Caco-2 (cell line): ENCODE measurements at regions of chr9 and their contacts with region 1.

Region 1: GRCh38 chr9:111661802-111662521 is 557 bp downstream of the GNG10 start:
- DNase-seq: peak; percentile 43
- H3K4me3 ChIP-seq: peak overlapping the region; percentile 90
- H3K4me3 Mint-ChIP-seq: peak overlapping the region; percentile 69
- H3K27ac Mint-ChIP-seq: peak overlapping the region; percentile 83
- H3K4me1 ChIP-seq: peaks cover 19% of the 10 kb centered on the region
- H3K4me1 Mint-ChIP-seq: peaks cover 25% of the 10 kb centered on the region
- H3K27me3 ChIP-seq: no peaks in the 10 kb centered on the region
- H3K27me3 Mint-ChIP-seq: no peaks in the 10 kb centered on the region
- CTCF ChIP-seq: no peak

Region 2: DNA sequence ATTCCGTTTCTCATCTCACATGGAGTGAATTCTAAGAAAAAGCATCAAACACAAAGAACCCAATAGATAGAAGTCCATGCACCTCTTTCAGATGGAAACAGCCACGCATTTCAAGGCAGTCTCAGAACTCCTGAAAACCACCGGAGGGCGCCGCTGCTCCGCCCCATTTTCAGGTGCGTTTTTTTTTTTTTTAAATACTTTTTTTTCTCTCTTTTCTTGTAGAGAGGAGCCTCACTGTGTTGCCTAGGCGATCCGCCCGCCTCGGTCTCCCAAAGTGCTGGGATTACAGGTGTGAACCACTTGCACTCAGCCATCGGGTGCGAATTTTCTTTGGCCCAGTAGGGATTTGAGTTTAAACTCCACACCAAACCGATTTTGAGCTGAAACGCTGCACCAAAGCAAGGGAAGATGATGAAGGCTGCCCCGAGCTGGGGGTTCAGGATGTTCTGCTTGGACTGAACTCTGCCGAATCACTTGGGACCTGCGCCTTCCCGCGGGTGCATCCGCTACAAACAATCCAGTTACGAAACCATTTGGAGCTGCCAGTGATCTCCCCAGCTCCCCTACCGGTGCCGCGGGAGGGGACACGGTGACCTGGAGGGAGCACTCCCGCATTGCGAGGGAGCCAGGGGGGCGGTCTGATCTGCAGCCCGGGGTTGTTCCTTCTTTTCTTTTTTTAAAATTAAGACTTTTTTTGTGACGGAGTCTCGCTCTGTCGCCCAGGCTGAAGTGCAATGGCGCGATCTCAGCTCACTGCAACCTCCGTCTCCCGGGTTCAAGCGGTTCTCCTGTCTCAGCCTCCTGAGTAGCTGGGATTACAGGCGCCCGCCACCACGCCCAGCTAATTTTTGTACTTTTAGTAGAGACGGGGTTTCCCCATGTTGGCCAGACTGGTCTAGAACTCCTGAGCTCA is 63.9 kb before region 1 on chr9:
- CTCF ChIA-PET with region 1: interaction called, 3 read pairs
- POLR2A ChIA-PET with region 1: interaction called, 4 read pairs
- intact Hi-C with region 1: loop called (anchors 2 kb)
- DNase-seq: peak; percentile 76 to 77
- H3K4me3 ChIP-seq: peak overlapping the region; percentile 61
- H3K4me3 Mint-ChIP-seq: peak overlapping the region; percentile 78
- H3K27ac Mint-ChIP-seq: peak overlapping the region; percentile 80
- H3K4me1 ChIP-seq: peaks cover 17% of the 10 kb centered on the region
- H3K4me1 Mint-ChIP-seq: peaks cover 12% of the 10 kb centered on the region
- H3K27me3 ChIP-seq: no peaks in the 10 kb centered on the region
- H3K27me3 Mint-ChIP-seq: no peaks in the 10 kb centered on the region
- CTCF ChIP-seq: peak; percentile 80 to 84

Region 3: DNA sequence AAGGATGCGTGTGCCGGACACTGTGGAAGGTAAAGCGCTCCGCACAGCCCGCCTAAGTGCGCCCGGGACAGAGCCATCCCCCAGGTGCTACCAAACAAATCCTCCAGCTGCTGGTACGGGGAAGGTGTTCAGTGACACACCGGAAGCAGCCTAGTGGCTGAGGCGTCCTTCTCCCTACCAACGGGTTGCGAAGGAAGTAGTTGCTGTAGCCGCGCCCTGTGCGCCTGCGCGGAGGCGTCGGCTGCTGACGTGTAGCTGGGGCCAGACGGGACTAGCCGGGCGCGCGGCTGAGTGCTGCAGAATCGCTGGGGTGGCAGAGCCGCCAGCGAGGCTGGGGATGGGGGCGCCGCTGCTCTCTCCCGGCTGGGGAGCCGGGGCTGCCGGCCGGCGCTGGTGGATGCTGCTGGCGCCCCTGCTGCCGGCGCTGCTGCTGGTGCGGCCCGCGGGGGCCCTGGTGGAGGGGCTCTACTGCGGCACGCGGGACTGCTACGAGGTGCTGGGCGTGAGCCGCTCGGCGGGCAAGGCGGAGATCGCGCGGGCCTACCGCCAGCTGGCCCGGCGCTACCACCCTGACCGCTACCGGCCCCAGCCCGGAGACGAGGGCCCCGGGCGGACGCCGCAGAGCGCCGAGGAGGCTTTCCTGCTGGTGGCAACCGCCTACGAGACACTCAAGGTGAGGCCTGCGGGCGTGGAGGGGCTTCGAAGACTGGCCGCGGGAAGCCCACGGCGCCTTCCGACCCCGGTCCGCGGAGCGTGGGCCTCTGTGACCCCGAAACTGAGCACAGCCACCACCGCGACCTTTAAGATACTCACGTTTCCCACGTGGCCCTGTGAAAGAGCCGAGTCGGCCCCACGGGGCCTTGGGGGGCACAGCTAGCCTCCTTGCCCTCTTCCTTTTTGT is 30.6 kb before region 1 on chr9 and contains the start of gene DNAJC25:
- CTCF ChIA-PET with region 1: no interaction called
- POLR2A ChIA-PET with region 1: interaction called, 9 read pairs
- intact Hi-C with region 1: loop called (anchors 1 kb)
- DNase-seq: peak; percentile 98 to 99
- H3K4me3 ChIP-seq: peak within 1 kb of the TSS; percentile 88
- H3K4me3 Mint-ChIP-seq: peak within 1 kb of the TSS; percentile 98
- H3K27ac Mint-ChIP-seq: peak within 1 kb of the TSS; percentile 85
- H3K4me1 ChIP-seq: peaks cover 28% of the 10 kb centered on the region
- H3K4me1 Mint-ChIP-seq: peaks cover 37% of the 10 kb centered on the region
- H3K27me3 ChIP-seq: no peaks in the 10 kb centered on the region
- H3K27me3 Mint-ChIP-seq: no peaks in the 10 kb centered on the region
- CTCF ChIP-seq: no peak
- total RNA-seq, gene DNAJC25: 10.2 and 10.4 TPM in 2 replicates

Region 4: DNA sequence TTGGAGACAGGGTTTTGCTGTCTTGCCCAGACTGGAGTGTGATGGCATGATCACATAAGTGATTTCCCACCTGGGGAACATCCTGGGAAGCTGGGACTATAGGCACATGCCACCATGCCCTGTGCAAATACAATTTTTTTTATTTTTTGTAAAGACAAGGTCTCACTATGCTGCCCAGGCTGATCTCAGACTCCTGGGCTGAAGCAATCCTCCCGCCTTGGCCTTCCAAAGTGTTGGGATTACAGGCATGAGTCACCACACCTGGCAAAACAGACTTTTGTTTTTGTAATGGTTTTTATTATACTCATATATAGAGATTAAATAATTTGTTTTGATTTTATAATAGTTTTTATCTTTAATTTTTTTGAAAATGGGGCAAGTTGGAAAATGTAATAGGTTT is 16.2 kb before region 1 on chr9:
- CTCF ChIA-PET with region 1: no interaction called
- POLR2A ChIA-PET with region 1: interaction called, 3 read pairs
- intact Hi-C with region 1: loop called (anchors 2 kb)
- DNase-seq: no peak
- H3K4me3 ChIP-seq: no peak overlapping the region
- H3K4me3 Mint-ChIP-seq: no peak overlapping the region
- H3K27ac Mint-ChIP-seq: no peak overlapping the region
- H3K4me1 ChIP-seq: peaks cover 36% of the 10 kb centered on the region
- H3K4me1 Mint-ChIP-seq: peaks cover 16% of the 10 kb centered on the region
- H3K27me3 ChIP-seq: no peaks in the 10 kb centered on the region
- H3K27me3 Mint-ChIP-seq: no peaks in the 10 kb centered on the region
- CTCF ChIP-seq: no peak